ENCODE measurements at regions of chr4 and their contacts with region 1.

Region 1: DNA sequence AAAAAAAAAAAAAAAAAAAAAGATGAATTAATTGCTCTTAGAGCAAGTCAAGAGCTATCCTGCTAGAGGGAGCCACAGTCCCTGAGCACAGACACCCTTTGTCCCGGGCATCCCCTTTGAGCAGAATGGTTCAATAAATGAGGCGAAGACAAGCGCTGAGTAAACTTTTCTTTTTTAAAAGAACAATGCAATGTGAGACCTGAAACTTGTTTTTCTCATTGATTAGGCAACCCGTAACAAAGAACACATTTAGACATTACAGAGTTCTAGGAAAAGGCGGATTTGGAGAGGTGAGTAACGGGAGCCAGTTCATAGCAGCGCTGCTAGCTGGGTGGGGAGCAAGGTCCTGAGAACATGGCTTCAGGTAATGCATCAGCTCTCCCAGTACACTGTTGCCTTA is 46.1 kb downstream of the GRK4 start:
- DNase-seq: peak; percentile 78
- H3K4me3 Mint-ChIP-seq: peak overlapping the region; percentile 13
- H3K27ac Mint-ChIP-seq: peak overlapping the region; percentile 96
- H3K4me1 Mint-ChIP-seq: peaks cover 20% of the 10 kb centered on the region
- H3K27me3 Mint-ChIP-seq: no peaks in the 10 kb centered on the region
- CTCF ChIP-seq: peak; percentile 19

Region 2: GRCh38 chr4:2745981-2746806 is 263.2 kb before region 1 on chr4:
- CTCF ChIA-PET with region 1: no interaction called
- POLR2A ChIA-PET with region 1: no interaction called
- intact Hi-C with region 1: no loop called
- DNase-seq: peak; percentile 53
- H3K4me3 Mint-ChIP-seq: no peak overlapping the region
- H3K27ac Mint-ChIP-seq: peak overlapping the region; percentile 67
- H3K4me1 Mint-ChIP-seq: peaks cover 16% of the 10 kb centered on the region
- H3K27me3 Mint-ChIP-seq: no peaks in the 10 kb centered on the region
- CTCF ChIP-seq: no peak

Region 3: DNA sequence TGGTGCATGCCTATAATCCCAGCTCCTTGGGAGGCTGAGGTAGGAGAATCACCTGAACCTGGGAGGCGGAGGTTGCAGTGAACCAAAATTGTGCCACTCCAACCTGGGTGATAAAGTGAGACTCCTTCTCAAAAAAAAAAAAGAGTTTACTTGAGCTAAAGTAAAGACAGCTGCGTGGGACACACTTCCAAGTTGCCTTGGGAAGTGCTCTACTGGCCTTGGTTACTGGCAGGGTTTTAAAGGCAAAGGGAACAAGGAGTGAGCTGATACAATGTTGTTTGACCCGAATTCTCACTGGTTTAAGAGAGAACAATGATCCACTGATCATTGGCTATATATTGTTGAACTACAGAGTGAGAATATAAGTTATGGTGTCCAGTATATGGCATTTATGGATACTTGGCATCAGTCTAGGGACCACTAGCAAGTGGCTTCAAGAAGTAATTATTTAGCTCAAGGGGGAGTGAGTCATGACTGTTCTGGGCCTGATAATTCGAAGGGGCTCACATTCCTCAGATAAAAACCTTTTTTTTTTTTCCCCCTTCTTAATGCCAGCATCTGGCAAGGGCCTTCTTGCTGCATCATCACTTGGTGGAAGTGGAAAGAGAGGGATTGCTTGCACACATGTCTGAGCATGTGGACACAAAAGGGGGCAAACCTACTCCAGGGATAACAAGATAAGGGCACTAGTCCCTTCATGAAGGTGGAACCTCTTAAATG is 13.7 kb before region 1 on chr4:
- CTCF ChIA-PET with region 1: interaction called, 3 read pairs
- POLR2A ChIA-PET with region 1: interaction called, 16 read pairs
- intact Hi-C with region 1: no loop called
- DNase-seq: no peak
- H3K4me3 Mint-ChIP-seq: no peak overlapping the region
- H3K27ac Mint-ChIP-seq: no peak overlapping the region
- H3K4me1 Mint-ChIP-seq: no peaks in the 10 kb centered on the region
- H3K27me3 Mint-ChIP-seq: no peaks in the 10 kb centered on the region
- CTCF ChIP-seq: no peak

Region 4: DNA sequence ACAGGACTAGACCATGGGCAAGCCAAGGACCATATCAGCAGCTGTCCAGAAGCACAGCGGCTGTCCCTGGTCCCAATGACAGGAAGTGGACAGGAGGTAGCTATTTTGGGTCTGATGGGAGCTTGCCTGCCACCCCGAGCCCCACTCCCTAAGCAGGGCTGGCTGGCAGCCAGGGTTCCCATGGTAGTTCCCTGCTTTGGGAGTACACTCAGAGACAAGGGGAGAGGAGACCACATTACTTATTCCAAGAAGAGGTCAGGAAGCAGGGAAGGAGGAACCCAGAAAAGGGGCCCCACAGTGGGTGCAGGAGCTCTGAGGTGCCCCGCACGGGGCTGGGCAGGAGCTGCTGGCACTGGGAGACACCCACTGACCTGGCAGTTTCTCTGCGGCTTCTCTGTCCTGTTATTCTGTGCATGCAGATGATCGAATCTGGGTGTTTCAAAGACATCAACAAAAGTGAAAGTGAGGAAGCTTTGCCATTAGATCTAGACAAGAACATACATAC is 28.6 kb after region 1 on chr4:
- CTCF ChIA-PET with region 1: interaction called, 40 read pairs
- POLR2A ChIA-PET with region 1: interaction called, 9 read pairs
- intact Hi-C with region 1: loop called (anchors 1 kb)
- DNase-seq: no peak
- H3K4me3 Mint-ChIP-seq: no peak overlapping the region
- H3K27ac Mint-ChIP-seq: no peak overlapping the region
- H3K4me1 Mint-ChIP-seq: peaks cover 10% of the 10 kb centered on the region
- H3K27me3 Mint-ChIP-seq: no peaks in the 10 kb centered on the region
- CTCF ChIP-seq: no peak

Region 5: GRCh38 chr4:3215261-3215660 is 205.8 kb after region 1 on chr4:
- CTCF ChIA-PET with region 1: no interaction called
- POLR2A ChIA-PET with region 1: no interaction called
- intact Hi-C with region 1: no loop called
- DNase-seq: no peak
- H3K4me3 Mint-ChIP-seq: no peak overlapping the region
- H3K27ac Mint-ChIP-seq: no peak overlapping the region
- H3K4me1 Mint-ChIP-seq: no peaks in the 10 kb centered on the region
- H3K27me3 Mint-ChIP-seq: no peaks in the 10 kb centered on the region
- CTCF ChIP-seq: no peak